CD4-positive, alpha-beta memory T cell (primary cell): ENCODE measurements at regions of chr1 and their contacts with region 1.

Region 1: GRCh38 chr1:187091666-187092065 is 262.9 kb downstream of the PLA2G4A start:
- DNase-seq: no peak
- H3K4me3 ChIP-seq: no peak overlapping the region
- H3K4me3 Mint-ChIP-seq: peak overlapping the region in 6 of 8 donors; percentile 4 to 76 (median 64)
- H3K27ac ChIP-seq: no peak overlapping the region
- H3K27ac Mint-ChIP-seq: peak overlapping the region in 5 of 7 donors; percentile 2 to 77 (median 33)
- H3K4me1 ChIP-seq: peaks cover 8% of the 10 kb centered on the region
- H3K4me1 Mint-ChIP-seq: peaks cover 11 to 20% (median 17%) of the 10 kb centered on the region in 4 donors
- H3K27me3 ChIP-seq: no peaks in the 10 kb centered on the region
- H3K27me3 Mint-ChIP-seq: no peaks in the 10 kb centered on the region

Region 2: GRCh38 chr1:187013582-187014200 is 78.0 kb before region 1 on chr1:
- CTCF ChIA-PET with region 1: no interaction called
- POLR2A ChIA-PET with region 1: no interaction called
- intact Hi-C with region 1: no loop called
- DNase-seq: no peak
- H3K4me3 ChIP-seq: no peak overlapping the region
- H3K4me3 Mint-ChIP-seq: no peak overlapping the region
- H3K27ac ChIP-seq: no peak overlapping the region
- H3K27ac Mint-ChIP-seq: no peak overlapping the region
- H3K4me1 ChIP-seq: no peaks in the 10 kb centered on the region
- H3K4me1 Mint-ChIP-seq: no peaks in the 10 kb centered on the region
- H3K27me3 ChIP-seq: no peaks in the 10 kb centered on the region
- H3K27me3 Mint-ChIP-seq: peaks cover under 1 to 7% of the 10 kb centered on the region in 2 donors

Region 3: DNA sequence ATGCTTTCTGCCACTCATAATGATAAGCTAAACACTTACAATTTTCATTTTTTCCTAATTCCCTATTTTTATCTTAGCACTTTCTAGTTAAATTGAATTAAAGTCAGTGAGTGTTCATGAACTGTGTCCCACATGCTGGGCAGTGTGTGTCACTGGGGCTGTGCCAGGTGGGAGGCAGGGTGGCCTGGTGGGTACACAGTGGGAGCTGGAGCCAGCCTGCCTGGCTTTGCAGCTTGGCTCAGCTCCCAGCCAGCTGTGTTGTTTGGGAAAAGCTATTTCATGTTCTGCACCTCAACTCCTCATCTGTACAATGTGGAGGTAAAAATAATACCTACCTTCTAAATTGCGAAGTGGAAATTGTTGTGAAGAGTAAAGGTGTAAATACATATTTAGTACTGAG is 24.5 kb before region 1 on chr1:
- CTCF ChIA-PET with region 1: interaction called, 4 read pairs
- POLR2A ChIA-PET with region 1: interaction called, 24 read pairs
- intact Hi-C with region 1: no loop called
- DNase-seq: no peak
- H3K4me3 ChIP-seq: no peak overlapping the region
- H3K4me3 Mint-ChIP-seq: no peak overlapping the region
- H3K27ac ChIP-seq: no peak overlapping the region
- H3K27ac Mint-ChIP-seq: no peak overlapping the region
- H3K4me1 ChIP-seq: no peaks in the 10 kb centered on the region
- H3K4me1 Mint-ChIP-seq: peaks cover 0 to 2% (median 0%) of the 10 kb centered on the region in 4 donors
- H3K27me3 ChIP-seq: no peaks in the 10 kb centered on the region
- H3K27me3 Mint-ChIP-seq: no peaks in the 10 kb centered on the region

Region 4: DNA sequence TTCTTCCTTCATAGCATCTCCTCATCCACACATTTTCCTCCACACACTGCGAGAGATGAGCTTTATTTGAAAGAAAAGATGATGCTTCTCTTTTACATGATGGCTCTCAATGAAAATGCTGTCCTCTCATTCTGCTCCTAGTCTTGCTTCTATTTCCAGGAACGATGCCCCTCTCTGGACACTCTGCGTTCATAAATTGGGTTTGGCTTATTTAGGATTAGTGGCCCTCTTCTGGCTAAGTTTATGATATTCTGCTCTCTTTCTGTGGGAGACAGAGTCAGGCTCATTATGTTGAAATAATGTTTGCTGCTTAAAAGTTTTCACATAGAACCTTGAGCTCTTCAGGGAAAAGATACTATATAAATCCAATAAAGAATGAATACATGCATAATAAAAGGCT is 11.7 kb after region 1 on chr1:
- CTCF ChIA-PET with region 1: no interaction called
- POLR2A ChIA-PET with region 1: no interaction called
- intact Hi-C with region 1: no loop called
- DNase-seq: no peak
- H3K4me3 ChIP-seq: no peak overlapping the region
- H3K4me3 Mint-ChIP-seq: no peak overlapping the region
- H3K27ac ChIP-seq: no peak overlapping the region
- H3K27ac Mint-ChIP-seq: no peak overlapping the region
- H3K4me1 ChIP-seq: no peaks in the 10 kb centered on the region
- H3K4me1 Mint-ChIP-seq: peaks cover 0 to 11% (median 6%) of the 10 kb centered on the region in 4 donors
- H3K27me3 ChIP-seq: no peaks in the 10 kb centered on the region
- H3K27me3 Mint-ChIP-seq: no peaks in the 10 kb centered on the region